Right ventricle myocardium inferior (tissue), 1 donor: ENCODE measurements at regions of chr17 and their contacts with region 1.

Region 1: GRCh38 chr17:301681-302298 is 50.8 kb downstream of the RPH3AL start:
- DNase-seq: peak; percentile 72
- ATAC-seq: peak; percentile 43

Region 2: GRCh38 chr17:233473-233941 is 68.3 kb before region 1 on chr17:
- intact Hi-C with region 1: no loop called
- DNase-seq: peak; percentile 56
- ATAC-seq: peak; percentile 29

Region 3: DNA sequence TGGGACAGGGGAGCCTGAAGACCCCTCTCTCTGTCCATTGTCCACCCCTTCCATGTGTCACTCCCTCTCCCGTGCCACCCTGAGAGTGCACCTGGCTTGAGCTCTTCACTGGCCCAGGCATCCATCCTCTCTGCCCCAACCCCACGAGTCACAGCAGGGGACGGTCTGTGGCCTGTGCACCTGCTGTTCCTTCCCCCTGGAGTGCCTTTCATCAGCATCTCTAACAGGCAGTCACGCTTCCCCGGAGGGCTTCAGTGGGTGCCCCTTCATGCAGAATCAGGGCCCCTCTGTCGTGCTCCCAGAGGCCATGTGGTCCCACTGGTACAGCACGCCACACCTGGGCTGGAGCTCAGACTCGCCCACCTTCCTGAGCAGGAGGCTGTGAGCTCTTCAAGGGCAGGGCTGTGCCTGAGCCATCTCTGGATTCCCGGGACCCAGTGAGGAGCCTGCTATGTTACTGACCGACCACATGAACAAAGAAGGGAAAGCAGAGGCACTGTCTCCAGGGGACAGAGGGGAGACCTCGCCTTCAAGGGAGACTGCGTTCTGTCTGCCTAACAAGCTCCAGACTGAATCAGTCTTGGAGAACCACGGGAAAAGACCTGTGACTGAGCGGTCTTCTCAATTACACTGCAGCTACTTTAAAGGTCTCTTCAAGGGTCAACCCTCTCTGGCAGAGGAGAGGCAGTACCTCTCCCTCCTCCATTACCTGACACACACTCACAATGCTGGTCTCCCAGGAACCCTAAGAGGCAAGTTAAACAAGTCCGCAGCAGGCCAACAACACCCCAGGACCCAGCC is 41.6 kb before region 1 on chr17:
- intact Hi-C with region 1: loop called (anchors 5 kb)
- DNase-seq: no peak
- ATAC-seq: no peak

Region 4: GRCh38 chr17:393806-394717 is 92.3 kb after region 1 on chr17:
- intact Hi-C with region 1: no loop called
- DNase-seq: no peak
- ATAC-seq: peak; percentile 37

Region 5: DNA sequence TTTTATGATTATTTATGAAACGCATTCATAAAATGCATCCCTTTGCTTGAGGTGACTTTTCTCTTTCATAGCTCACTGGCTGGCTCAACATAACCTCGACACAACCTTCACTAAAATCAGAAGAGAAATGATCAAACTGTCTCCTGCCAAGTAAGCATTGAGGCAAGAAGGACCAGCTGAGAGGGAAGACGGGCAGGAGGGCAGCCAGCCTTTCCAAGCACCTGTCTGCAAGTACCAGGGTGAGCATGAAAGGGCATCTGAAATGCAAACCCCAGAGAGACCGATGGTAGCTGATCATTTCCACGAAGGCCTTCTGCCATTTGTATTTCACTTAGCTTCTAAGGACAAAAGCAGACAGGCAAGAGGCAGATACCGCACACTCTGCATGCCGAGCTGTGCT is 102.9 kb after region 1 on chr17:
- intact Hi-C with region 1: no loop called
- DNase-seq: no peak
- ATAC-seq: no peak